ENCODE measurements at regions of chr4 and their contacts with region 1.

Region 1: GRCh38 chr4:128787509-128788311 is 21.8 kb upstream of the JADE1 start:
- DNase-seq: no peak
- H3K4me3 ChIP-seq: no peak overlapping the region
- H3K27ac ChIP-seq: no peak overlapping the region
- H3K4me1 ChIP-seq: no peaks in the 10 kb centered on the region
- H3K27me3 ChIP-seq: no peaks in the 10 kb centered on the region
- CTCF ChIP-seq: no peak
- POLR2A ChIP-seq: no peak

Region 2: DNA sequence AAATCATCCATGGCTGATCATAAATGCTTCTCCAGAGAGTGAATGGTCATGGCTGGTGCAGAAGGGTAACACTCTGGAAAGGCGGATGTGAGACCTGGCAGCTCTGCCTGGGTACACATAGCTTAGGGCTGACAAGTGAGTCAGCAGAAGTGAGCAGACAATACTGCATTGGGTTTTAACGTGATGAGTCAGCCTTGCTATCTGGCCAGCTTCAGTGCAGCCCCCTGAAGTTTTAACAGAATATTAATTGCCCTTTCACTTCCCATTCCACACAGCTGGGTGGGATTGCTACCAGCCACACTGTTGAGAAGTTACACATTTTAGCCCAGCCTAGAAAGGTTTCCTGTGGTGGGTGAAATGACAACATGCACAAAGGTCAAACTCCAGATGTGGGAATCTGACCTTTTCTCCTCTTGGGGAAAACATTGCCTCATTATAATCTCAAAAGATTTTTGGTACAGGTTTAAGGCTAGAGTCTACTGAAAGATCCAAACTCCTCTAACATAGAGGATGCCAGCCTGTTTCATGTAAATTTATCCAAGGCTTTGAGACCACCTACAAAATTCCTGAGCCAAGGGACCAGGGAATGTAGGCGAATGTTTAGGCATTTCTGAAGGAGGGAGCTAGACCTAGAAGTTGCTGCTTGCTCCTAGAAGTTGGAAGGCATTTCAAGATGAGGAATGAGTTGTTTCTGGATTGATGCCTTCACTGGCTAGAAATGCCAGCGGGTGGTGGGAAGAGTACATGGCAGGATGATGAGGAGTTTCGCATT is 269.8 kb before region 1 on chr4:
- intact Hi-C with region 1: no loop called
- DNase-seq: no peak
- H3K4me3 ChIP-seq: no peak overlapping the region
- H3K27ac ChIP-seq: no peak overlapping the region
- H3K4me1 ChIP-seq: no peaks in the 10 kb centered on the region
- H3K27me3 ChIP-seq: no peaks in the 10 kb centered on the region
- CTCF ChIP-seq: no peak
- POLR2A ChIP-seq: no peak

Region 3: DNA sequence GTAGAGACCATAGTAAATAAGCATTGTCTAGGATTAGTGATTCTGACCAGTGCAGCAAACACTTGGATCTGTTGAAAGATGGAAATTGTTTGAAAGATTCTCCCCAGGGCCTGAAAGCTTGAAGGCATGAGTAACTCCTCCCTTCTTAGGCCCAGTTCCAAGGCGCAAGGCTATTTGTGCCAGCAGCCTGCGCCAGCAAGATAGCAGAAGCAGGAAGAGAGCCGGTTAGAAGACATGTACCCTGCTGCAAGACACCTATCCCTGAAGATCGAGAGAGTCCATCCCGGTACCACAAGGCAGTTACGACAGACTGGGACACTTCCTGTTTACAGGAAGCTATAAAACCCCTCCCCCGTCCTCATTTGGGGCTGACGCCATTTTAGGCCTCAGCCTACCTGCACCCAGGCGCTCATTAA is 50.6 kb before region 1 on chr4:
- intact Hi-C with region 1: loop called (anchors 2 kb)
- DNase-seq: no peak
- H3K4me3 ChIP-seq: no peak overlapping the region
- H3K27ac ChIP-seq: no peak overlapping the region
- H3K4me1 ChIP-seq: no peaks in the 10 kb centered on the region
- H3K27me3 ChIP-seq: no peaks in the 10 kb centered on the region
- CTCF ChIP-seq: no peak
- POLR2A ChIP-seq: no peak

Region 4: DNA sequence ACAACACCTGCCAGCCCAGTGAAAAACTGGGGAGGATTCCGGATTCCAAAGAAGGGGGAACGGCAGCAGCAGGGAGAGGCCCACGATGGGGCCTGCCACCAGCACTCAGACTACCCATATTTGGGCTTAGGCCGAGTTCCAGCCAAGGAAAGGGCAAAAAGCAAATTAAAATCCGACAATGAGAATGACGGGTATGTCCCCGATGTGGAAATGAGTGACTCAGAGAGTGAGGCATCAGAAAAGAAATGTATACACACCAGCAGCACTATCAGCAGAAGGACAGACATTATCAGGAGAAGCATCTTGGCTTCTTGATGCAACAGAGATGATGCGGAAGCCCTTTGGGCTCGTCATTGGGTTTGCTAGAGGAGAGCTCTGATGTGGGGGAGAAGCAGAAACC is 84.2 kb after region 1 on chr4:
- intact Hi-C with region 1: no loop called
- DNase-seq: no peak
- H3K4me3 ChIP-seq: no peak overlapping the region
- H3K27ac ChIP-seq: no peak overlapping the region
- H3K4me1 ChIP-seq: no peaks in the 10 kb centered on the region
- H3K27me3 ChIP-seq: no peaks in the 10 kb centered on the region
- CTCF ChIP-seq: no peak
- POLR2A ChIP-seq: no peak

Measured in prostate gland (tissue), 2 donors.